ENCODE measurements at regions of chr22 and their contacts with region 1.

Region 1: GRCh38 chr22:29306175-29306834 is at the start of gene GAS2L1:
- DNase-seq: no peak
- ATAC-seq: peak; percentile 62
- H3K4me3 Mint-ChIP-seq: peak within 1 kb of the TSS; percentile 75
- H3K27ac Mint-ChIP-seq: no peak within 1 kb of the TSS
- H3K4me1 Mint-ChIP-seq: peaks cover 24% of the 10 kb centered on the region
- H3K27me3 Mint-ChIP-seq: peaks cover 16% of the 10 kb centered on the region
- CTCF ChIP-seq: no peak
- total RNA-seq, gene GAS2L1: not detected in 2 replicates

Region 2: DNA sequence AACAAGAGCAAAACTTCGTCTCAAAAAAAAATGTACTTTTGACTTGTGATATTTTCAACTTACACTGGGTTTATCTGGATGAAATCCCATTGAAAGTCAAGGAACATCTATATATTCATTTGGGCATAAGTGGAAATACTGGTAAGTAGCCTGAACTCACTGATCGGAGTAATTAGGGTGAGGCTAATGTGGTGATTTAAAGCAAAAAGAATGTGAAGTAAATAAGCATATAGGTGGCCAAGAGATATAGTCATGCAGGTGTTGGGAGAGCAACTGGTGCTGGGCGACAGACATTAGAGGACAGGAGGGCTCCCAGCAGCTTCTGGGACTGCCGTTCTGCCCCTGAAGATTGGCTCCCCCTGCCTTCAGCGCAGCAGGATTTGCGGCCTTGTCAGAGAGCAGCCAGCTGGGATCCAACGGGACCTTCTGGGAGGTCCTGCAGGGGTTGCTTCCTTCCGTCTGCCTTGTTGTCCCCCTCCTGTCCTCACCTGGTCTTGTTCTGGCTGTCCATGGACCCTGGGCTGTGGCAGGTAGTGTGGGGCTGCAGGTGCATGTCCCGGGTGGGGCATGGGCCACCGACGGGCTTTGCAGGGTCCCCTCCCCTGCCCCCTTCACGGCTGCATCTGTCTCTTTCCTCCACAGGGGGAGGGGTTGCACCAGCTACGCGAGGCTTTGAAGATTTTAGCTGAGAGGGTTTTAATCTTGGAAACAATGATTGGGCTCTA is 52.6 kb before region 1 on chr22:
- CTCF ChIA-PET with region 1: no interaction called
- POLR2A ChIA-PET with region 1: interaction called, 10 read pairs
- intact Hi-C with region 1: no loop called
- DNase-seq: no peak
- ATAC-seq: no peak
- H3K4me3 Mint-ChIP-seq: no peak overlapping the region
- H3K27ac Mint-ChIP-seq: no peak overlapping the region
- H3K4me1 Mint-ChIP-seq: no peaks in the 10 kb centered on the region
- H3K27me3 Mint-ChIP-seq: peaks cover 5% of the 10 kb centered on the region
- CTCF ChIP-seq: no peak

Measured in activated B cell treated with CpG ODN at 0.5 μM for 24 hours (primary cell).